Activated CD8-positive, alpha-beta T cell treated with anti-CD3 and anti-CD28 coated beads for 36 hours (primary cell): ENCODE measurements at regions of chr3 and their contacts with region 1.

Region 1: DNA sequence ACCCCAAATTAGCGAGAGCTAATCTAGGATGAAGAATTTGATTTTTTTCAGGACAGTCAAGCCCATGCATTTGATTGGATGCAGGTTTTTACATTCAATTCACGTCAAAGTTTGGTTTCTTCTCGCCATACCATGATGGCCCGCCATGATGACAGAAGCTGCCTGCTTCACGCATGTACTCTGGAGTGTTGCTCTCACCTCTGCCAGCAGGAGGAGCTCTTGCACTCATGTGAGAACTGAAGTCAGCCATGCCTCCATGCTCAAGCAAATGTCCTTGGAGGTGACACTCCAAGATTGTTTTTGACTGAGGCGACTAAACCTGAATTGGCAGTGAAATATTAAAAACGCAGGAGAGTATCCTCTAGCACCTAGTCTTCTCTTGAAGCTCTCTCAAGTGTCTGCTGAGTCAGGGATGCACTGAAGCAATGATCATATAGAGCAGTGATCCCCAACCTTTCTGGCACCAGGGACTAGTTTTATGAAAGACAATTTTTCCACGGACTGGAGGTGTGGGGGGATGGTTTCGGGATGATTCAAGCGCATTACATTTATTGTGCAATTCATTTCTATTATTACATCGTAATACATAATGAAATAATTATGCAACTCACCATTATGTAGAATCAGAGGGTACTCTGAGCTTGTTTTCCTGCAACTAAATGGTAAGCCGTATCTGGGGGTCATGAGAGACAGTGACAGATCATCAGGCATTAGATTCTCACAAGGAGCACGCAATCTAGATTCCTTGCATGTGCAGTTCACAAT is 121.0 kb downstream of the SAMMSON start:
- DNase-seq: peak; percentile 81
- ATAC-seq: peak; percentile 66
- H3K4me3 Mint-ChIP-seq: no peak overlapping the region
- H3K27ac Mint-ChIP-seq: no peak overlapping the region
- H3K4me1 Mint-ChIP-seq: no peaks in the 10 kb centered on the region
- H3K27me3 Mint-ChIP-seq: peaks cover 7% of the 10 kb centered on the region
- CTCF ChIP-seq: peak; percentile 69

Region 2: GRCh38 chr3:70040386-70040785 is 80.2 kb before region 1 on chr3:
- CTCF ChIA-PET with region 1: no interaction called
- POLR2A ChIA-PET with region 1: no interaction called
- intact Hi-C with region 1: no loop called
- DNase-seq: no peak
- ATAC-seq: no peak
- H3K4me3 Mint-ChIP-seq: no peak overlapping the region
- H3K27ac Mint-ChIP-seq: no peak overlapping the region
- H3K4me1 Mint-ChIP-seq: no peaks in the 10 kb centered on the region
- H3K27me3 Mint-ChIP-seq: peaks cover 1% of the 10 kb centered on the region
- CTCF ChIP-seq: no peak

Region 3: GRCh38 chr3:70108072-70108471 is 12.5 kb before region 1 on chr3:
- CTCF ChIA-PET with region 1: interaction called, 13 read pairs
- POLR2A ChIA-PET with region 1: no interaction called
- intact Hi-C with region 1: no loop called
- DNase-seq: peak; percentile 44
- ATAC-seq: no peak
- H3K4me3 Mint-ChIP-seq: no peak overlapping the region
- H3K27ac Mint-ChIP-seq: no peak overlapping the region
- H3K4me1 Mint-ChIP-seq: no peaks in the 10 kb centered on the region
- H3K27me3 Mint-ChIP-seq: peaks cover 6% of the 10 kb centered on the region
- CTCF ChIP-seq: peak; percentile 59

Region 4: DNA sequence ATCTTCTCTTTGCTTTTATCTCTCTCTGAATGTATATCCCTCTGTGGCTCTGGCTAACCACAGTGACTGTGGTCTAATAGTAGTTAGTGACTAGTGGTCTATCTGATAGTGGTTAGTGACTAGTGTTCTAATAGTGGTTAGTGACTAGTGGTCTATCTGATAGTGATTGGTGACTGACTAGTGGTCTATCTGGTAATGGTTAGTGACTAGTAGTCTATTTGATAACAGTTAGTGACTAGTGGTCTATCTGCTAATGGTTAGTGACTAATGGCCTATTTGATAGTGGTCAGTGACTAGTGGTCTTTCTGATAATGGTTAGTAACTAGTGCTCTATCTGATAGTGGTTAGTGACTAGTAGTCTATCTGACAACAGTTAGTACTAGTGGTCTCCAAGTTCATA is 81.4 kb after region 1 on chr3:
- CTCF ChIA-PET with region 1: no interaction called
- POLR2A ChIA-PET with region 1: no interaction called
- intact Hi-C with region 1: no loop called
- DNase-seq: no peak
- ATAC-seq: no peak
- H3K4me3 Mint-ChIP-seq: no peak overlapping the region
- H3K27ac Mint-ChIP-seq: no peak overlapping the region
- H3K4me1 Mint-ChIP-seq: no peaks in the 10 kb centered on the region
- H3K27me3 Mint-ChIP-seq: peaks cover 1% of the 10 kb centered on the region
- CTCF ChIP-seq: no peak

Region 5: DNA sequence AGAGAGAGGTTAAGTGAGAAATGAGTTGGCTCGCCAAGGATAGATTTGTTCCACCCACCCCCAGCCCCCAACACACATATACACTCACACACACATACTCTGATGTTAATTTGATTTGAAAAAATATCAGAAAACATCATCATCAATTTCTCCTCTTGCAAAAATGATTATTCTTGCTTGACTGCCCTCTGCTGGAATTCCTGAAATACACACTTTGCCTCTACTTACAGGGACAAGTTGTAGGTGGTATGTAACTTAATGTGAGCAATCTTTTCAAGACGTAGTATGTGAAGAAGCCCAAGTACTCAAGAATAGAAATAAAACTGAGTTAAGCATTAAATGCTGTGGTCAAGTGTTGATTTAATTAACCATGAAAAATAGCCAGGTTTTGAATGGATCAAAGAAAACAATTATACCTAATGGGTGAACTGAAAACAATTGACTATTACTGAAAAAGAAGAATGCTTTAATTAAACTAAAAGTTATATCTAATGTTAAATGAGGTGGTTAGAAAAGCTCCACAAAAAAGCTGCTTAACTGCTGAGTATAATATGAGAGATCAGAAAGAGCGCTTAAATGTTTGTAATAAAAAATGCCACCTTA is 238.5 kb after region 1 on chr3:
- CTCF ChIA-PET with region 1: interaction called, 8 read pairs
- POLR2A ChIA-PET with region 1: interaction called, 4 read pairs
- intact Hi-C with region 1: loop called (anchors 10 kb)
- DNase-seq: peak; percentile 6
- ATAC-seq: no peak
- H3K4me3 Mint-ChIP-seq: no peak overlapping the region
- H3K27ac Mint-ChIP-seq: no peak overlapping the region
- H3K4me1 Mint-ChIP-seq: peaks cover 2% of the 10 kb centered on the region
- H3K27me3 Mint-ChIP-seq: peaks cover 8% of the 10 kb centered on the region
- CTCF ChIP-seq: peak; percentile 57

Region 6: DNA sequence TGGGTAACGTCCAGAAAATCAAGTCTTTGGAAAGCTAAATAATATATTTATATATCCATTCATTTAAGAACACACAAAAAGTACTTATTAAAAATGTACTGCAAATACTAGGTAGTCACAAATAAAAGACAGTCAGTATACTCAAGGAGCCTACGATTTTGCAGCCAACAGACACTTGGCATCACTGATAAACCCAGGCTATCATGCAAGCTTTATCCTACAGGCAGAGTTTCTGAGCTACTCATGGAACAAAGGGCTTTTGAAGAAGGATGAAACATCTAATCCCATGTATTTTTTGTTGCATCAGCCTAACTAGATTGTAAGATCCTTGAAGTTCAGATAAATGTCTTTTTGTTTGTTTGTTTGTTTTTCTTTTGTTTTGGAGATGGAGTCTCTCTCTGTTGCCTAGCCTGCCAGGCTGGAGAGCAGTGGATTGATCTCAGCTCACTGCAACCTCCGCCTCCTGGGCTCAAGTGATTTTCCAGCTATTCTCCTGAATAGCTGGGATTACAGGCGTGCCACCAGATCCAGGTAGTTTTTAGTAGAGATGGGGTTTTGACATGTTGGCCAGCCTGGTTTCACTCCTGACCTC is 511.3 kb after region 1 on chr3:
- CTCF ChIA-PET with region 1: no interaction called
- POLR2A ChIA-PET with region 1: no interaction called
- intact Hi-C with region 1: no loop called
- DNase-seq: no peak
- ATAC-seq: no peak
- H3K4me3 Mint-ChIP-seq: no peak overlapping the region
- H3K27ac Mint-ChIP-seq: no peak overlapping the region
- H3K4me1 Mint-ChIP-seq: no peaks in the 10 kb centered on the region
- H3K27me3 Mint-ChIP-seq: peaks cover 14% of the 10 kb centered on the region
- CTCF ChIP-seq: no peak